ENCODE measurements at regions of chrX and their contacts with region 1.

Region 1: DNA sequence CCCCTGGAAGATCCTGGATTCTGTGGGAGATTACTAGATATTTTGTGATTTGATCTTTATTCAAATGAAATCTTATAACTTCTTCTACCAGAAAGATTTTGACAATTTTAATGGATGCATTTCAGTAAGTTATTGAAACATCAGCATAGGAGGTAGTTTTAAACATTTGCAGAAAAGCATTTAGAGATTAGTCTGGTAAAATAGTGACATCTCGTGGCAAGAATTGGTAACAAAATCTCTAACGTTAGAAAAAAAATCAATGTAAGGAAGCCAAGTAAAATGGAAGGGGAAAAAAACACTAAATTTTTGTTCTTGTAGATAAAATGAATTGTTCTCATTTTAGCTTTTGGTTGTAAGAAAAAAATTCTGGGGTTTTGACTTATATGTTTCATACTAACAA is 73.3 kb downstream of the TASL start:
- DNase-seq: peak in 1 of 42 donors; percentile 2

Region 2: GRCh38 chrX:30270639-30271038 is 233.7 kb before region 1 on chrX:
- intact Hi-C with region 1: loop called (anchors 5 kb)
- DNase-seq: no peak